ENCODE measurements at regions of chr21 and their contacts with region 1.

Region 1: DNA sequence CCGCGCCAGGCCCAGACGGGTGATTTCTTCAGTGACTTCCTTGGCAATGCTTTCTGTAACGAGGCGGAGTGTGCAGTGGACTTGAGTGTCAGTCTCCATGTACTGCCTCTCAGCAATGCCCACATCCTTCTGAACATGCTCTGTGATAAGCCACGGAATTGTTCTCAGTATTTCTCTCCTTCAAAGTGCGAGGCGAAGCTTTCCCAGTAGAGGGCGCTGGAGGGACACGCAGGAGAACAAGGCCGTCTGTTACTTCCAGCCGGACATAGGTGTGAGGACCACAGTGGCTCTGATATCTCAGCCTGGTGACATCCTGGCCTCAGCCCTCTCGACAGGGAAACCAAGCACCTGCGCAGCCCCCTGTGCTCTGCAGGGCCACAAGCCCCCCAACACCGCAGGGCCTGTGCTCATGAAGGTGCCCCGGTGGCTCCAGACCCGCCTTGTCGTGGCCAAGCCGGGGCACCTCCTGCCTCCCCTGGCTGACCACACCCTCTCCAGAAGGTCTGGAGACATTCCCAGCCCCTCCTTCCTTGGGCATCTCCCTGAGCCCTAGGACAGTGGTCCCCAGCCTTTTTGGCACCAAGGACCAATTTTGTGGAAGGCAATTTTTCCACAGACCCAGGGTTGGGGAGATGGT is 46.1 kb upstream of the BACE2 start:
- DNase-seq: peak; percentile 81 to 83
- H3K4me3 ChIP-seq: no peak overlapping the region
- H3K4me3 Mint-ChIP-seq: no peak overlapping the region
- H3K27ac Mint-ChIP-seq: no peak overlapping the region
- H3K4me1 ChIP-seq: no peaks in the 10 kb centered on the region
- H3K4me1 Mint-ChIP-seq: no peaks in the 10 kb centered on the region
- H3K27me3 ChIP-seq: no peaks in the 10 kb centered on the region
- H3K27me3 Mint-ChIP-seq: peaks cover 21% of the 10 kb centered on the region
- CTCF ChIP-seq: peak; percentile 67 to 75

Region 2: GRCh38 chr21:40115804-40116203 is 1006.1 kb before region 1 on chr21:
- CTCF ChIA-PET with region 1: no interaction called
- POLR2A ChIA-PET with region 1: no interaction called
- intact Hi-C with region 1: no loop called
- DNase-seq: no peak
- H3K4me3 ChIP-seq: no peak overlapping the region
- H3K4me3 Mint-ChIP-seq: no peak overlapping the region
- H3K27ac Mint-ChIP-seq: no peak overlapping the region
- H3K4me1 ChIP-seq: no peaks in the 10 kb centered on the region
- H3K4me1 Mint-ChIP-seq: no peaks in the 10 kb centered on the region
- H3K27me3 ChIP-seq: no peaks in the 10 kb centered on the region
- H3K27me3 Mint-ChIP-seq: no peaks in the 10 kb centered on the region
- CTCF ChIP-seq: no peak

Region 3: DNA sequence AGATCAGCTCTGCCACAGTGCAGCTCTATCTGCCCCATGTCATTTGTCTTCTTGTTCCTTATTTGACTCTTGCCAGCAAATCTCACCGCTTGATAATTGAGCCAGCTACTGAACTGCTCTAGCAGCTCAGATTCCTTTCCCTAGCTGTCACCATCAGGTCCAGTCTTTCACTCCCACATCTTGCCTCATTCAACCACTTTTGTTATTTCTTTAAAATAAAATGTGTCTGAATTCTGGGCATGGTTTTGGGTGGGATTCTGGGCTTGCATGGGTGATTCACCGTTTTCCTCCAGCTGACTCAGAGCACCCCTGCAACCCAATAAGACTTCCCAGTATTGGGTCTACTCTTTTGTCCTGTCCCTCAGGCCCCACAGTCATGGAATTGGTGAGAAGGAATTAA is 490.7 kb before region 1 on chr21:
- CTCF ChIA-PET with region 1: no interaction called
- POLR2A ChIA-PET with region 1: no interaction called
- intact Hi-C with region 1: no loop called
- DNase-seq: no peak
- H3K4me3 ChIP-seq: no peak overlapping the region
- H3K4me3 Mint-ChIP-seq: no peak overlapping the region
- H3K27ac Mint-ChIP-seq: no peak overlapping the region
- H3K4me1 ChIP-seq: no peaks in the 10 kb centered on the region
- H3K4me1 Mint-ChIP-seq: no peaks in the 10 kb centered on the region
- H3K27me3 ChIP-seq: no peaks in the 10 kb centered on the region
- H3K27me3 Mint-ChIP-seq: peaks cover 18% of the 10 kb centered on the region
- CTCF ChIP-seq: no peak

Region 4: DNA sequence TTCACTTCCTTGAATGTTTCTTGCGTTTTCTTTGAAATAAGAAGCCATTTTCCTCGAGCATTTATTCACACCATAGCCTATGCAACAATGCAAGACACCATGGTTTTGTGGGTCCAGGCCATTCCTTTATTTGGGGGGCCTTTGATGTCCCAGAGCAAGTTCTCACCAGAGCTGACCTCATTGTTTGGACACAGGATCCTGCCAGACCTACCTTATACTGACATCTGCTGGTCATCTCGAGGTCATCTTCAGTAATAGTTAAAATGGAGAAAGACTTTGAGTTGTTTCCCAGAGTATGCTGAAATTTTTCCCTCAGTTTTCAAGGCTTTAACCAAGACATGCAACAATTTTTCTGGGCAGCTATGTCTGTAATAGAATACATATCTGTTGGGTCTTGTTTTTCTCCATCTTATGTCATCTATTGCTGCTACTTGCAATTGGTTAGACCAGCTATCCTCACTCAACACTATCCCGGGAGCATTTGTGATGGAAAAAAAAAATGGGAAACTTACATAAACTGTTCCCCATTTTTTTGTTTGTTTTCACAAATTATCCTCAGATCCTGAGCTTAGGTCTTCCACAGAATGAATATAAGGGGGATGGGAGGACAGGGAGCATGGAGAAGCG is 12.1 kb after region 1 on chr21:
- CTCF ChIA-PET with region 1: interaction called, 7 read pairs
- POLR2A ChIA-PET with region 1: no interaction called
- intact Hi-C with region 1: loop called (anchors 1 kb)
- DNase-seq: peak in 1 of 2 experiments; percentile 43
- H3K4me3 ChIP-seq: no peak overlapping the region
- H3K4me3 Mint-ChIP-seq: no peak overlapping the region
- H3K27ac Mint-ChIP-seq: no peak overlapping the region
- H3K4me1 ChIP-seq: no peaks in the 10 kb centered on the region
- H3K4me1 Mint-ChIP-seq: no peaks in the 10 kb centered on the region
- H3K27me3 ChIP-seq: no peaks in the 10 kb centered on the region
- H3K27me3 Mint-ChIP-seq: peaks cover 14% of the 10 kb centered on the region
- CTCF ChIP-seq: peak; percentile 43 to 67

Region 5: DNA sequence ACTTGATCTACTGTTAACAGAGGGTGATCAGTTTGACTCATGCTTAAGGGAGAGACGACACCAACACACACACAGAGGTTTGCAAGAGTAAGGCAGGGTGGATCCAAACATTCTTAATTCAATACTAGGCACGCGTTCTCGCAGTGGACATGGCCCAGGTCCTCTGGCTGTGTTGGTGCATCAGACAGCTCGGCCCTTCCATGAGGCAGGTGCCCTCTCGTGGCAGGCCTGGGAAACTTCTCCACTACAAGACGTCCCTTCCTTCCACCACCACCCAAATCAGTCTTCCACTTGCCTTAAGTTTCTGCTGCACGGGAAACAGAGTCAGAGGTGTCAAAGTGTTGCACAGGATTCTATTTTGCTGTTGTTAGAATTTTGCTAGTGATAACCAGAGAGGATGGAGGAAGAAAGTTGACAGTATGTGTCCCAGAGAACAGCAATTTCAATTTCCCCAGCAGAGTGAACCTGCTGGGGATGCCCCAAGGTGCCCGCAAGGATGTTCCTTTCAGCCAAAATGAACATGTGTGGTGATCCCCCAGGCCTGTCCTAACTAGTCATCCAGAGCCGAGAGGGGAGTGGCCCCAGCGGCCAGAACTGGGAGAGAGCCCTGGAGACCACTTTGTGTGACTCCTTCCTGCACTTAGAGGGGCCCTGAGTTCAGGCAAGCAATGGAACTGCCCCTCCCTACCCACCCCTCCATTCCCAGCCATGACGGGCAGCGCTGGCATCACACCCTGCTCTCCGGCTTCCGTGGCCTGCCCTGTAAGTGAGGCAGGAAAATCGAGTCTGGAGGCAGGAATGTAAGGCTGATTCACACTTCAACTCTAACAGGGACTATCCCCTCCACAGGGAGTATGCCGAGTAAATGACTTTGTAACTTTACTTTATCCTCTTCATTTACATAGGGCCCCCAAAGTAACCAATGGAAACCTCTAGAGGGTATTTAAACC is 338.9 kb after region 1 on chr21:
- CTCF ChIA-PET with region 1: no interaction called
- POLR2A ChIA-PET with region 1: no interaction called
- intact Hi-C with region 1: loop called (anchors 5 kb)
- DNase-seq: peak; percentile 72 to 74
- H3K4me3 ChIP-seq: no peak overlapping the region
- H3K4me3 Mint-ChIP-seq: no peak overlapping the region
- H3K27ac Mint-ChIP-seq: no peak overlapping the region
- H3K4me1 ChIP-seq: no peaks in the 10 kb centered on the region
- H3K4me1 Mint-ChIP-seq: peaks cover 13% of the 10 kb centered on the region
- H3K27me3 ChIP-seq: no peaks in the 10 kb centered on the region
- H3K27me3 Mint-ChIP-seq: no peaks in the 10 kb centered on the region
- CTCF ChIP-seq: peak; percentile 77 to 78